ENCODE measurements at regions of chr11 and their contacts with region 1.

Region 1: GRCh38 chr11:77039491-77040400 is 5.5 kb downstream of the B3GNT6 start:
- DNase-seq: no peak
- ATAC-seq: no peak
- H3K4me3 ChIP-seq: no peak overlapping the region
- H3K27ac ChIP-seq: no peak overlapping the region
- H3K4me1 ChIP-seq: peaks cover 31% of the 10 kb centered on the region
- H3K27me3 ChIP-seq: no peaks in the 10 kb centered on the region
- CTCF ChIP-seq: peak; percentile 60

Region 2: GRCh38 chr11:76939211-76939631 is 100.5 kb before region 1 on chr11:
- CTCF ChIA-PET with region 1: no interaction called
- POLR2A ChIA-PET with region 1: no interaction called
- intact Hi-C with region 1: loop called (anchors 5 kb)
- DNase-seq: peak; percentile 89
- ATAC-seq: peak; percentile 94
- H3K4me3 ChIP-seq: no peak overlapping the region
- H3K27ac ChIP-seq: peak overlapping the region; percentile 39
- H3K4me1 ChIP-seq: peaks cover 20% of the 10 kb centered on the region
- H3K27me3 ChIP-seq: no peaks in the 10 kb centered on the region
- CTCF ChIP-seq: no peak

Measured in PC-3 (cell line).